MCF 10A (cell line): ENCODE measurements at regions of chr10 and their contacts with region 1.

Region 1: DNA sequence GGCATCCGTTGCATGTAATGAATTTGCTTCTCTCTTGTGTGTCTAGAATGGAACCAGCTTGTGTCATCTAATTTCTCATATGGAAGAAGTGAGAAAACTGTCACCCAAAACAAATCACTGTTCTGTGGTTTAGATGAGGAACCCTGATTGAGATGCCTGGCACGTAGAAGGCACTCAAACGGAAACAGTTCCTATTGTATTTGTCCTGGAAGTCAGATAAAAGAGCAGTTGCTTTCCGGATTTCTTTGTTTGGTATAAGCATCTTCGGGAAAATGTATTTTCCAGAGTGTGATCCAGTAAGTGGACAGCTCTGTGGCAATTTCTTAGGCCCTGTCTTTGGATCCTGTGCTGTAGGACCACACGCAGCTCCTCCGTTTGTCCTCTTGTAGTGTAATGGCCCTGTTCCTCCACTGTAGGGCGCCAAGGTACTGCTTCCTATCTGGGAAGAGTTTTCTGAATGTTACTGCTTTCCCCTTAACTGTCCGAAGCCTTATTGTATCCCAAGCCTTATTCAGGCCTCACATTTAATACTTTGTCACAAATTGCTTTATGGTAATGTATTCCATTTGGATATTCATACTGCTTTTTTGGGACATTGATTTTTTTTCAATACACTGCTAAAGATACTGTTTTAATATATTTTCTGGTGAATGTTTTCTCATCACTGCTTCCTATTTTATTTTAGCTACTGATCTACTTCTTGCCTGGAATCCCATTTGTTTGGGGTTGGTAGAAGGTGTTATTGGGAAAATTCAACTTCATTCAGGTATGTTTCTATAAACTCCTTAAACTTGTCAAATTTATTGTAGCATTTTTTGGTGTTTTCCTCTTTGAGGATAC is 24.8 kb downstream of the INPP5F start:
- DNase-seq: peak; percentile 84
- H3K4me3 Mint-ChIP-seq: no peak overlapping the region
- H3K27ac Mint-ChIP-seq: no peak overlapping the region
- H3K4me1 Mint-ChIP-seq: peaks cover 11% of the 10 kb centered on the region
- H3K27me3 Mint-ChIP-seq: no peaks in the 10 kb centered on the region
- CTCF ChIP-seq: peak; percentile 91

Region 2: DNA sequence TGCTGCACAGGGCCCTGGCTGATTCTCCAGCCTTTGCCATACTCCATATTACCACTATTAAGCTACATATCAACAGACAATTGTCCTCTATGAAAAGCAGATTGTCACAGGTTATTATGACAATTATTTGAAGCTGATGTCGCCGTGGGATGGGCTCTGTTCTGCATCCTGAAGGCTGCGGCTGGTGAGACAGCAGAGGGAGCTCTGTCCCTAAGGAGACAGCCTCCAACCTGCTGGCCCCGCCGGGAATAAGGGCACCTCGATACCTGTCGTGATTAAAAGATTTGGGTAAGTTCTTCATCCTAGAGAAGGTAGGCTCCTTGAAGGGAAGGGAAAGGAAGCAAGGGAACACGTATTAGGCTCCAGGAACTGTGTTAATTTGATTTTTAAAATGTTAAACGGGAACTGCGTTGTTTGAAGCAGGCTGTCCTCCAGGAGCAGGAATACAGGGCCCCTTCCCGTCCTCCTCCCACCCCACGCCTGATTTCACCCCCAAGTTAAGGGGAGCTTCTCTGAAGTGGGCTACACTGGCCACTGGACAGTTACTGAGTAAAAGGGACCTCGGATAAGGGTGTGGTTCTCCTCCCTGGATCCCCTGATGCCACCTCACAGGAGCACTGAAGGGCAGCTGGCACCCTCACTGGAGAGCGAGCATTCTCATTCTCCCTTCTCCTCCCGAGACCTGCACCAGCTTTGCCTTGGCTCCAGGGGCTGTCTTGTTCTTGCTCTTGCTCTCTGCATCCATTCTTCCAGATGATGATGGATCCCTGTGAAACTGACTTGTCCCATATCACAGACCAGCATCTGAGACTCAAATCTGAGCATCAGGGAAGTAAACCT is 142.1 kb before region 1 on chr10:
- CTCF ChIA-PET with region 1: interaction called, 37 read pairs
- POLR2A ChIA-PET with region 1: interaction called, 3 read pairs
- intact Hi-C with region 1: loop called (anchors 1 kb)
- DNase-seq: peak; percentile 66
- H3K4me3 Mint-ChIP-seq: no peak overlapping the region
- H3K27ac Mint-ChIP-seq: no peak overlapping the region
- H3K4me1 Mint-ChIP-seq: peaks cover 5% of the 10 kb centered on the region
- H3K27me3 Mint-ChIP-seq: no peaks in the 10 kb centered on the region
- CTCF ChIP-seq: peak; percentile 58

Region 3: DNA sequence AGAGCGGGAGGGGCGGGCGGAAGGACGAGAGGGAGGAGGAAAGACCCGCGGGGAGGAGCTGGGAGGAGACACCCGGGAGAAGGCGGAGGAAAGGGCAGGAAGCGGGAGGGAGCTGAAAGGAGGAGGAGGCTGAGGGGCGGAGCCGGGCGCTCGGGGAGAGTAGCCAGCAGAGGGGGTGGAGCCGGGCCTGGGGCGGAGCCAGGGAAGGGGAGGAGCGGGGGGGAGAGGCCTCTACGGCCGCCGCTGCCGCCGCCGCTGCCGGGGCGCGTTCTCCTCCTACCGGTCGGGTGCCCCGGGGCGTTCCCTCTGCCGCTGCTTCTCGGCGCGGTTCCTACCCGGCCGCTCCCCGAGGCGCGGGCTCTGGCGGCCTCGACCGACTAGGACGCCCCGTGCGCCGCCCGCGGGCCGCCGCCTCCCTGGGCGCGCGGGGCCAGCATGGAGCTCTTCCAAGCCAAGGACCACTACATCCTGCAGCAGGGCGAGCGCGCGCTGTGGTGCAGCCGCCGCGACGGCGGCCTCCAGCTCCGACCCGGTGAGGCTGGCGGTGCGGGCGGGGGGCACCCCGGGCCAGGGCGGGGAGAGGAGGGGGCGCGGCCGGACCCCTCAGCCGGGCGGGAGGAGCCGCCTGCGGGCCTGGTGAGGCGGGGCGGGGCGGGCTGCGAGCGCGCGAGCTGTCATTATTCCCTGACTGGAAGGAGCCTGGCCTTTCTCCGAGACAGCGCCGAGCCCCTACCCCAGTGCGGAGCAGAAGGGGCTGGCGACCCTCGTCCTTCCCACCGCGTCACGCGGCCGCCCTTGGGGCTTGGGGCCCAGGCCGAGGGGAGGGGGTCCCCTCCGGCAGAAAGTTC is 24.6 kb before region 1 on chr10 and contains the start of gene INPP5F:
- CTCF ChIA-PET with region 1: interaction called, 4 read pairs
- POLR2A ChIA-PET with region 1: interaction called, 12 read pairs
- intact Hi-C with region 1: no loop called
- DNase-seq: peak; percentile 98
- H3K4me3 Mint-ChIP-seq: peak within 1 kb of the TSS; percentile 82
- H3K27ac Mint-ChIP-seq: peak within 1 kb of the TSS; percentile 76
- H3K4me1 Mint-ChIP-seq: peaks cover 45% of the 10 kb centered on the region
- H3K27me3 Mint-ChIP-seq: no peaks in the 10 kb centered on the region
- CTCF ChIP-seq: peak; percentile 5
- total RNA-seq, gene INPP5F: 10.3 and 14.9 TPM in 2 replicates

Region 4: DNA sequence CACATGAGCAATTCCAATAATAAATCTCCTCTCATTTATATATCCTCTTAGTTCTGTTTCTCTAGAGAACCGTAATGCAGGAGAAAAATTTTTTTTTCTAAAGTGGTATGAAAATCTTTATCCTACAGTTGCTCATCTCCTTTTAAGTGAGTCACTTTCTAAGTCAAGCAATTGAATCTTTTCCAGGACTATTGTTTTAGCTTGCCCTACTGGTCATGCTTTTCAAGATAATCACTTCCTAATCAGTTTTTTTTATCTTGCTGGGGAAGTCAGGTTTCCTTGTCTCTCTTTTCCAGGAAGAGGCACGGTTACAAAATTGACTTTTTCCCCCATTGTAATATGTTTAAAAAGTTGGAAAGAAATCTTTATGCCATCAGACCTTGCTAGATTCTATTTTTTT is 19.3 kb after region 1 on chr10:
- CTCF ChIA-PET with region 1: interaction called, 20 read pairs
- POLR2A ChIA-PET with region 1: interaction called, 5 read pairs
- intact Hi-C with region 1: no loop called
- DNase-seq: peak; percentile 61
- H3K4me3 Mint-ChIP-seq: no peak overlapping the region
- H3K27ac Mint-ChIP-seq: peak overlapping the region; percentile 46
- H3K4me1 Mint-ChIP-seq: peaks cover 28% of the 10 kb centered on the region
- H3K27me3 Mint-ChIP-seq: no peaks in the 10 kb centered on the region
- CTCF ChIP-seq: no peak

Region 5: GRCh38 chr10:119831656-119832055 is 81.0 kb after region 1 on chr10:
- CTCF ChIA-PET with region 1: interaction called, 11 read pairs
- POLR2A ChIA-PET with region 1: interaction called, 3 read pairs
- intact Hi-C with region 1: loop called (anchors 2 kb)
- DNase-seq: no peak
- H3K4me3 Mint-ChIP-seq: no peak overlapping the region
- H3K27ac Mint-ChIP-seq: no peak overlapping the region
- H3K4me1 Mint-ChIP-seq: no peaks in the 10 kb centered on the region
- H3K27me3 Mint-ChIP-seq: no peaks in the 10 kb centered on the region
- CTCF ChIP-seq: no peak

Region 6: DNA sequence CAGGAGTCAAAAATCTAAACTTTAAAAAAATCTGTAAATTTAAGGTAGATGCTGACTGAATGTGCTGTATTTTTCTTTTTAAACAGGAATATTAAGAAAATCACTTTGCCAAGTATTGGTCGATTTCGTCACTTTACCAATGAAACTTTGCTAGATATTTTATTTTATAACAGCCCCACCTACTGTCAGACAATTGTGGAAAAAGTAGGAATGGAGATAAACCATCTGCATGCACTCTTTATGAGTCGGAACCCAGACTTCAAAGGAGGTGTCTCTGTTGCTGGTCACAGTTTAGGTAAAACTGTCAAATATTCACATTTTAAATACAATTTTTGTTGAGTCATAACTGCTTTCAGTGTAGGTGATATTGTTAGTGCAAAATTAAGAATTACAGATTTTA is 167.1 kb after region 1 on chr10:
- CTCF ChIA-PET with region 1: no interaction called
- POLR2A ChIA-PET with region 1: no interaction called
- intact Hi-C with region 1: loop called (anchors 2 kb)
- DNase-seq: peak; percentile 16
- H3K4me3 Mint-ChIP-seq: no peak overlapping the region
- H3K27ac Mint-ChIP-seq: no peak overlapping the region
- H3K4me1 Mint-ChIP-seq: no peaks in the 10 kb centered on the region
- H3K27me3 Mint-ChIP-seq: no peaks in the 10 kb centered on the region
- CTCF ChIP-seq: no peak